HCT116 (cell line): ENCODE measurements at regions of chr21 and their contacts with region 1.

Region 1: DNA sequence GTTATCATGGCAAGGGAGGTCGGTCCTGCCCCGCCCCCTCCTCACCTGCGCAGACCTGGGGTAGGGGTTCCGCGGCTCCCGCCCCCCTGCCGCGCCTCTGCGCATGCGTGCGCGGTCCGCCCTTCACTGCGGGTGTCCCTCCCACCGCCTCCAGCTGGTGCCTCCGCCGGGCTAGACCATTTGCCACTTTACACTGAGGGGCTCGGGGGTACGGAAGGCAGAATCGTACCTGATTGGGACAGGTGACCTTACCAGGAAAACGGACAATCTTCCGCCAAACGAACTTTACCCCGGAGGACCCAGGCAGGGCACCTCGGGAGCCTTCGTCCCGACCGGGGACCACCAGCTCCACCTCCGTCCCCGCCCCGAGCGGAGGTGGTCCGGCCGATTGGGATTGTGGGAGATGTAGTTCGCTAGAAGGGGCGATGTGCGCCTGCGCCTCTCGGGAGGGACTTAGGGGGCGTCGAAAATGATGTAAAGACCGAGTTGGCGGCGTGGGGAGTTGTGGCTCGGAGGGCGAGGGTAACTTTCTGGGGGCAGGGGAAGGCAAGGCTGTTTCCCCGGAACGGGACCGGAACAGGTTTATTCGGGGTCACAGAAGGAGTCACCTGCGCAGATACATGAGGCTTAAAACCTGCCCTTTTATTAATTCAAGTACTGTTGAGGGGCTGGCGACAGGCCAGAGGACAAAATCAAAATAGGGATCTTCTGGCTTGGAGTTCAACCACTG is at the start of gene DNAJC28:
- DNase-seq: peak; percentile 85
- ATAC-seq: peak; percentile 97
- H3K4me3 ChIP-seq: peak within 1 kb of the TSS; percentile 60 to 69
- H3K27ac ChIP-seq: peak within 1 kb of the TSS; percentile 34
- H3K4me1 ChIP-seq: peaks cover 5 to 10% of the 10 kb centered on the region in 2 experiments; a peak in 2 of 4 replicates
- H3K27me3 ChIP-seq: no peaks in the 10 kb centered on the region
- CTCF ChIP-seq: no peak
- POLR2A ChIP-seq: peak; percentile 28
- RAD21 ChIP-seq: no peak
- total RNA-seq, gene DNAJC28: 0.81 TPM

Region 2: DNA sequence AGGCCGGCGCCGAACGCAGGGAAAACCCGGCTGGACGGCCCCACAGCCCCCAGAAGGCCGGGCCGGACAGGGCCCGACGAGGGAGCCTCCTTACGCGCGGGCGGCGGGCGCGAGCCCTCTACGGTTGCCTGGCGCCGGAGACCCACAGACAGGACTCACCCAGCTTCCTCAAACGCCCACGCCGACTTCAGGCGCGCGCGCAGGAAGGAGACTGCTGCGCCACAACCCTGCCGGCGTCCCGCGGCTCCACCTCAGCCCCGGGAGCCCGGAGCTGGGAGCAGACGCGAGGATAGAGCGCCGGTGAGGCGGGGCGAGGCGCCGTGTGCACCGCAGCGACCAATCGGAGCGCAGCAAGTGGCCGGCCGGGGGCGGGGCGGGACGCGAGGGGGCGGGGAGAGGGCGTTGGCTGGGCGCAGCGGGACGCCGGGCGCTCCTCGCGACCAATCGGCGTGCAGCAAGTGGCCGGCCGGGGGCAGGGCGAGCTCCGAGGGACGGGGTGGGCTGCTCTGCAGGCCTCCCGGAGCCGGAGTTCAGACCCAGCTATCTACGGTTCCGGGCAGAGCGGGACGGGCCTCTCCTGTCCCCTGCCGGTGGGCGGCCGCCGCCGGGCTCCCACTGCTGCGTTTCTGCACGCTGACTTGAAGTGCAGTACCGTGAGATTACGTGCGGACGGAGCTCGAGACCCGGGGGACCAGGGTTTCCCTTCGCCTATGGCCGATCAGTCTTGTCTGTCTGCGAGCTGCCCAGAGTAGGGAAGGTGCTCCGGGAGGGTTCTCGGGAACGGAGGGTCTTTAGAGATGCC is 11.7 kb before region 1 on chr21 and contains the start of gene TMEM50B:
- CTCF ChIA-PET with region 1: interaction called, 7 read pairs
- POLR2A ChIA-PET with region 1: interaction called, 52 read pairs
- RAD21 ChIA-PET with region 1: no interaction called
- intact Hi-C with region 1: no loop called
- DNase-seq: peak; percentile 83
- ATAC-seq: peak; percentile 94
- H3K4me3 ChIP-seq: peak within 1 kb of the TSS; percentile 78 to 92
- H3K27ac ChIP-seq: peak within 1 kb of the TSS; percentile 82
- H3K4me1 ChIP-seq: peaks cover 5 to 13% of the 10 kb centered on the region in 2 experiments
- H3K27me3 ChIP-seq: no peaks in the 10 kb centered on the region
- CTCF ChIP-seq: no peak
- POLR2A ChIP-seq: peak; percentile 77
- RAD21 ChIP-seq: 0 out of 2 replicates have a peak, but pooled peaks have one; percentile 6
- total RNA-seq, gene TMEM50B: 18.8 TPM